Gastrocnemius medialis (tissue), 4 donors: ENCODE measurements at regions of chr10 and their contacts with region 1.

Region 1: DNA sequence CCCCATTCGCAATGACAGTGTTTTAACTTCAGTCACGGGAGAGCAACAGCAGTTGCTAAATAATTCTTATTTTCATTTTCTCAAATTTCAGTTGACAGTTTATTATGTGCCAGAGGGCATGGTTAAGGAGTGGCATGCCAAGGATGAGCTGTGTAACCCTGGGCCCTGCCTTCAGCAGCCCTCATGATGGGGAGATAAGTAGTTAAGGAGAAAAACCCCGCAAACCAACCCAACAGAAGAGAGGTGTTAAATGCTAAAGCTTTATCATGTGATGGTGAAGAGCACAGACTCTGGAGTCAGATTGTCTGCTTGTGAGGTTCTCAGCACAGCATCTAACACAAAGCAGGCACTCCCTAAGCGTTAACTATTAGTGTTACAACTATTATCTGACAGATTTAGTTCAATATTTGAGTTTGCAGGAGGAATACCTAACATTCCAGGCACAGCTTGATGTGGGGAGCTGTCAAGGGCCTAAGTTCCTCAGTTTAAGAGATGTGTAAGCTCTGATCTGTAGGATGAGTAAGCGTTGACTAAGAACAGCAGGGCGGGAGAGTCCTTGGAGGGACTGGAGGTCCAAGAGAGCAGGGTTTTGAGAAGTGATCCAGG is 29.6 kb downstream of the STAM start:
- DNase-seq: peak; percentile 27 to 73
- ATAC-seq: peak; percentile 68 to 70
- H3K4me3 ChIP-seq: no peak overlapping the region
- H3K27ac ChIP-seq: peak overlapping the region; percentile 81 to 88 (median 86)
- H3K4me1 ChIP-seq: peaks cover 71 to 85% of the 10 kb centered on the region in 2 donors
- H3K27me3 ChIP-seq: no peaks in the 10 kb centered on the region
- CTCF ChIP-seq: no peak
- POLR2A ChIP-seq: peak in 1 of 2 donors; percentile 33

Region 2: GRCh38 chr10:17643755-17644484 is 29.6 kb before region 1 on chr10 and contains the start of gene STAM:
- in situ Hi-C with region 1: no loop called
- intact Hi-C with region 1: loop called (anchors 2 kb)
- DNase-seq: peak; percentile 84 to 90
- ATAC-seq: peak; percentile 83 to 91
- H3K4me3 ChIP-seq: peak within 1 kb of the TSS; percentile 72 to 97 (median 93)
- H3K27ac ChIP-seq: peak within 1 kb of the TSS; percentile 83 to 99 (median 97)
- H3K4me1 ChIP-seq: peaks cover 38 to 43% of the 10 kb centered on the region in 2 donors
- H3K27me3 ChIP-seq: no peaks in the 10 kb centered on the region
- CTCF ChIP-seq: no peak
- POLR2A ChIP-seq: peak; percentile 88 to 91
- total RNA-seq, gene STAM: 28.6 to 52.0 (median 35.2) TPM

Region 3: DNA sequence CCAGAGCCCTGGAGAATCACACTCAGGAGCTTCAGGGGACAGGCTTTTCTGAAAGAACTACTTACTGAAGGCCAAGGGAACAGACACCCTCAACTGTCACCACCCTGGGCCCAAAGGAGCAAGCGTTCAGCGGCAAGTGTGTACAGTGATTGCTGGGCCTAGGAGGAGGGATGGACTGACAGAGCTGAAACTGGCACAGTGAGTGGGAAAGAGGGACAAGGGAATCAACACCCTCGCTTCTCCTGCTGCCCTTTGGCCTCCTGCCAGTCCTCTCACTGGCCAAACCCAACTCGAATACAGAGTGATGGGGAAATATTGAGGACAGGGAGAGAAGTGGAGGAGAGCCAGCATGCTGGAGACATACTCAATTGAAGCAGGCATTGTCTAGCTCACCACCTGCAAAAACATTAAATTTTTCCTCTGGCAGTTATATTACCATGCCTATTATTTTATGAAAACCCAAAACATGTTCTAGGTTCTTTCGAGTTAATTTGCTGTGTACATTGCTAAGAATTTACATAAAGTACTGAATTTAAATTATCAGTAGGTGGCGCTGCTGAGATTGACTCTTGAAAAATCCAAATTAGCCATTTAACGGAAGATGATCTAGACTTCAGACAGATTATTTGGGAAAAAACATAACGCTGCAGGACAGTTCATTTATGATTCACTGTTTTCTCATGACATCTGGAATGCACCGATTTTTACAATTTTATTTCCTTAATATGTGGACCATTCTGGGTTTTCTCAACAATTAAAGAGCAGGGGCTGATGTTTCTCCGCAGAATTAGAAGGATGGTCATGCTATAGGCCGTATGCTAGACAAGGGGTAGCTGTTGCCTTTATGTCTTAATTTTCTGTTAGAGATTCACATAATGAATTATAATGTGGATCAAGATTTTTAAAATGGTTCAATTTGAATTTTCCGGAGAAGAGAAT is 63.7 kb after region 1 on chr10:
- in situ Hi-C with region 1: no loop called
- intact Hi-C with region 1: loop called (anchors 5 kb)
- DNase-seq: peak in 1 of 2 donors; percentile 70
- ATAC-seq: peak in 1 of 2 donors; percentile 32
- H3K4me3 ChIP-seq: no peak overlapping the region
- H3K27ac ChIP-seq: no peak overlapping the region
- H3K4me1 ChIP-seq: peaks cover 13 to 17% of the 10 kb centered on the region in 2 donors
- H3K27me3 ChIP-seq: no peaks in the 10 kb centered on the region
- CTCF ChIP-seq: peak in 4 of 5 experiments; percentile 38 to 72 (median 56)
- POLR2A ChIP-seq: no peak